Dorsolateral prefrontal cortex (tissue), 120 donors: ENCODE measurements at regions of chr21 and their contacts with region 1.

Region 1: DNA sequence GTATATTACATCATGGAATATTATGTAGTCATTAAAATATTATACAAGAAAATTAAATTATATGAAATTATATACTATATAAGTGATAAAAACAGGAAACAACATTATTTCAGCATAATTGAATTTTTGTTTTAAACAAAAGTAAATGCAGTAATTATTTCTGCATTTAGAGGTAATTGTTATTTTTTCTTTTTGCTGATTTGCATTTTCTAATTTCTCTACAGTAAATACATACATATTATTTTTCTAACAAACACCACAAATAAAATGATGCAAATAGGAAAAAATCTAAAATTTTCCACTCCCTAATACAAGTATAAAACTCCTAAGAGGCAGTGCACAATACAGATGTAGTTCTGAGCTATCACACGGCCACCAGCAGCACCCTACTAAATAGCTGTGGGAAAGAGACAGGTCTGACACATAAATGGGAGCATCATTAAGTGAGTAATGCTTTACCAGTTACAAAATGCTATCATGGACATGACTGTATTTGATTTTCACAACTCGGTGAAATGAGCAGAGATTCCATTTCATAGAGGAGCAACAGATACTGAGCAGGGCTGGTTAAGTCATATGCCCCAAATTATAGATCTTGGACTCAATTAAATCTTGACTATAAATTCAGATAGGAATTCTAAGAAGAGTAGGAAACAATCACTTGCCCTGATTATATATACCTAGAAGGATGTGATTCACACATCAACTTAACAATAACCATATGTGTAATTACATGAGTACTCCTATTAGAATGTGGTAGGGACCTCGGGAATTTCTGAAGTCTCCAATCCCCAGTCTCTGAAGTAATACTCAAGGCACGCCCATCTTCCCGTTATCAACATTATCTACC is 49.0 kb downstream of the NRIP1 start:
- DNase-seq: no peak
- H3K4me3 ChIP-seq: no peak overlapping the region
- H3K27ac ChIP-seq: no peak overlapping the region
- H3K27me3 ChIP-seq: no peaks in the 10 kb centered on the region
- CTCF ChIP-seq: no peak

Region 2: DNA sequence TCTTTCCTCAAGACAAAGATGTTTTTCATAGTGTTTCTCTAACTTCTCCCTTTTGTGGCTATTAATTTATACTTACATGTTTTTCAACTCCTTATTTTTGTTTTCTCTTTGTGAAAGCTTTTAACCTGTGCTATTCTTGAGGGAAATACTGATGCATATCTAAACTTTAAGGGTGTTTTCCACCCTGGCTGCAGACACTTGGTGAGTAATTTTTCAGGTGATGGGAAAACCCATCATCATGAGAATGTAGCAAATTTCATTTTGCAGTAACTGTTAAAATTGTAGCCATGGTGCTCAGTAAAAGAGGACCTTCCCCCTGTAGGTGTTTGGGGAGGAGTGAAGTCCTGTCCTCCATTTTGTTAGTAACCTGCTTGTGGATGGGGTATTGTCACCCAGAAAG is 929.3 kb before region 1 on chr21:
- intact Hi-C with region 1: loop called in 1 of 2 experiments (anchors 10 kb)
- DNase-seq: no peak
- H3K4me3 ChIP-seq: no peak overlapping the region
- H3K27ac ChIP-seq: no peak overlapping the region
- H3K27me3 ChIP-seq: no peaks in the 10 kb centered on the region
- CTCF ChIP-seq: no peak

Region 3: DNA sequence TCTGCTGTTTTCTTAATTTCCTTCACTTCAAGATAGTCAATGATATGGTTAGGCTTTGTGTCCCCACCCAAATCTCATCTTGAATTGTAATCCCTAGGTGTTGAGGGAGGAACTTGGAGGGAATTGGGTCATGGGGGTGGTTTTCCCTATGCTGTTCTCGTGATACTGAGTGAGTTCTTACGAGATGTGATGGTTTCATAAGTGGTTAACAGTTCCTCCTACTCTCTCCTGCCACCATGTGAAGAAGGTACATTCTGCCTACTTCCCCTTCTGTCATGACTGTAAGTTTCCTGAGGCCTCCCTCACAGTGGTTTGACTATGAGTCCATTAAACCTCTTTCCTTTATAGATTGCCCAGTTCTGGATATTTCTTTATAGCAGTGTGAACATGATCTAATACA is 395.7 kb before region 1 on chr21:
- intact Hi-C with region 1: no loop called
- DNase-seq: no peak
- H3K4me3 ChIP-seq: no peak overlapping the region
- H3K27ac ChIP-seq: no peak overlapping the region
- H3K27me3 ChIP-seq: no peaks in the 10 kb centered on the region
- CTCF ChIP-seq: no peak

Region 4: GRCh38 chr21:15183813-15184257 is 168.0 kb after region 1 on chr21:
- intact Hi-C with region 1: no loop called
- DNase-seq: no peak
- H3K4me3 ChIP-seq: no peak overlapping the region
- H3K27ac ChIP-seq: no peak overlapping the region
- H3K27me3 ChIP-seq: no peaks in the 10 kb centered on the region
- CTCF ChIP-seq: no peak